Activated CD4-positive, alpha-beta memory T cell treated with anti-CD3 and anti-CD28 coated beads, Interleukin-2, amount 10 ng/mL, durations not matched to agents 7 days and 5 days (primary cell): ENCODE measurements at regions of chr1 and their contacts with region 1.

Region 1: DNA sequence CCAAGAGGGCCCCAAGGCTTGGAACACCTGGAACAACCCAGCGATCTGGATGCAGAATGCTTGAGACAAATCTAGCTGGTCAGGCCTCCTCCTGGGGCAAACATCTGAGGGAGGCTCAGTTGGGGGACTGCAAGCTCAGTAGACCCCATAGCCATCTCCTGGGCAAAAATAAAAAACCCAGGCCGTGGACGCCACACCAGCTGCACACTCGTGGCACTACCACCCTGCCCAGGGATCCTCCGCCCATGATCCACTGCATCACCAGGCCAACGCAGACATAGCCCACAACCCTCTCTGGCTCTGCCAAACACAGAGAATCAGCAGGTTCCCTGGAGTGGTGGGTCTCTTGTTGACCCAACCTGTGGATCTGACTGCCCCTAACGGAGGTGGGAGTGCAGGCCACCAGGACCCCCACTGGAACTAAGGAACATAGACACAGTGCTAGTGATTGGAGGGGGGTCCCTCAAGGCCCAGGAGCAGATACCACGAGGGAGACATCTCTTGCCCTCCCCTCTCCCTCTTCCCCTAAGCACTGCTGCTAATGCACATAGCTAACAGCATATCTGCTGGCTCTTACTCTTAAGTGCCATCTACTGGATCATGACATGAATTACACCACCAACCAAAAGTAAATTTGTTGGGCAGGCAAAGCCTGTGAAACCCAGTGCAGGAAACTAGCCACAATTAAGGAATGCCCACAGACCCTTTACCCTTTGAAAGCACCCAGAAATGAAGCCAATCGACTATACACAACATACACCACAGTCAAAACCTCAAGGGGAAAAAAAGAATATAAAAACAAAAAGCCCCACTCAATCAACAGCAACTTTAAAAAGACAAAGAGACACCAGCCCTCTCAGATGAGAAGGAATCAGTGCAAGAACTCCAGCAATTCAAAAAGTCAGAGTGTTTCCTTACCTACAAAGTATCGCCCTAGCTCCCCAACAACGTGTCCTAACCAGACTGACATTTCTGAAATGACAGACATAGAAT is 147.3 kb downstream of the CHD1L start:
- DNase-seq: no peak
- H3K4me3 Mint-ChIP-seq: no peak overlapping the region
- H3K27ac Mint-ChIP-seq: no peak overlapping the region
- H3K4me1 Mint-ChIP-seq: peaks cover 2% of the 10 kb centered on the region
- H3K27me3 Mint-ChIP-seq: peaks cover 12% of the 10 kb centered on the region

Region 2: DNA sequence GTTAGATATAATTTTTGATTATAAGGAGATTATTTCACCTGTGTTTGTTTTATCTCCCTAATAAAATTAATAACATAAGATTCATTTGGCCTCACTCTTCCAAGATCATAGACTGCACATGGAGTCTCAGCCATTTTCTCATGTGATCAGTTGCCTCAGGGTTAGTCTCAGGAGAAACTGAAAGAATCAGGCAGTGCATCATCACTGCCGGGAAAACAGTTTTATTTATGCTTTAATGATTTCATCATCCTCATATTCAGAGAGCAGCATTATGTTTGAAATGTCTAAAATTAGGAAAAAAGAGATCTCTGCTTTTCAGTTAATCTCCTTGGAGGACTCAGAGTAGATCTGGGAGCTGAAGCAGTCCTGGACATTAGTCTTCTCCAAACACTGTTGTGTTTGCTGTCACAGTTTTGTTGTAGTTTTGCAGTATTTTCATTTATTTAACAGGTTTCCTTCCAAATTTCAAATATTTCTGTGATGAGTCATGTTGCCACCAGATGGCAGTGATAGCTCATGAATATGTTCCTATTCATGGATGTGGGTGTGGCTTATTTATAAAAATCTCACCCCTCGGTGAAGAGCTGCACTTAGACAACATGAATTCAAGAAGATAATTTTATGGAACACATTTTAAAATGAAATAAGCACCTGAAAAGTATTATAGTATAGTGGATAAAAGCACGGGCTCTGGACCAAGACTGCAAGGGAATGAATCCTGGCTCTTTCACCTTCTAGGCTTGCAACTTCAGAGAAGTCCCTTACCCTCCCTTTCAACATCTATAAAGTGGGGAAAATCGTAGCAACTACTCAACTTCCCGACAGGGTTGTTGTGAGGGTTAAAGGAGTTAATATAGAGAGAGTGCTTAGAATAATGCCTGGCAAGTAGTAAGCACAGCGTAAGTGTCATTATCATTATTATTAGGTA is 116.2 kb before region 1 on chr1:
- CTCF ChIA-PET with region 1: interaction called, 46 read pairs
- POLR2A ChIA-PET with region 1: interaction called, 5 read pairs
- DNase-seq: peak; percentile 23
- H3K4me3 Mint-ChIP-seq: no peak overlapping the region
- H3K27ac Mint-ChIP-seq: no peak overlapping the region
- H3K4me1 Mint-ChIP-seq: peaks cover 7% of the 10 kb centered on the region
- H3K27me3 Mint-ChIP-seq: no peaks in the 10 kb centered on the region

Region 3: GRCh38 chr1:147351140-147351835 is 38.5 kb before region 1 on chr1:
- CTCF ChIA-PET with region 1: no interaction called
- POLR2A ChIA-PET with region 1: no interaction called
- DNase-seq: no peak
- H3K4me3 Mint-ChIP-seq: no peak overlapping the region
- H3K27ac Mint-ChIP-seq: no peak overlapping the region
- H3K4me1 Mint-ChIP-seq: no peaks in the 10 kb centered on the region
- H3K27me3 Mint-ChIP-seq: peaks cover 13% of the 10 kb centered on the region